ENCODE measurements at regions of chr10 and their contacts with region 1.

Region 1: GRCh38 chr10:511101-511848 is 178.2 kb downstream of the DIP2C start:
- DNase-seq: peak; percentile 71
- ATAC-seq: peak; percentile 88
- H3K4me3 ChIP-seq: no peak overlapping the region
- H3K27ac ChIP-seq: no peak overlapping the region
- H3K4me1 ChIP-seq: peaks cover 26% of the 10 kb centered on the region
- H3K27me3 ChIP-seq: no peaks in the 10 kb centered on the region
- CTCF ChIP-seq: peak; percentile 98
- EP300 ChIP-seq: no peak
- POLR2A ChIP-seq: no peak
- RAD21 ChIP-seq: peak; percentile 92

Region 2: GRCh38 chr10:484441-484924 is 26.8 kb before region 1 on chr10:
- CTCF ChIA-PET with region 1: no interaction called
- POLR2A ChIA-PET with region 1: no interaction called
- in situ Hi-C with region 1: no loop called
- intact Hi-C with region 1: no loop called
- DNase-seq: no peak
- ATAC-seq: no peak
- H3K4me3 ChIP-seq: no peak overlapping the region
- H3K27ac ChIP-seq: no peak overlapping the region
- H3K4me1 ChIP-seq: no peaks in the 10 kb centered on the region
- H3K27me3 ChIP-seq: no peaks in the 10 kb centered on the region
- CTCF ChIP-seq: no peak
- EP300 ChIP-seq: no peak
- POLR2A ChIP-seq: no peak
- RAD21 ChIP-seq: no peak

Region 3: DNA sequence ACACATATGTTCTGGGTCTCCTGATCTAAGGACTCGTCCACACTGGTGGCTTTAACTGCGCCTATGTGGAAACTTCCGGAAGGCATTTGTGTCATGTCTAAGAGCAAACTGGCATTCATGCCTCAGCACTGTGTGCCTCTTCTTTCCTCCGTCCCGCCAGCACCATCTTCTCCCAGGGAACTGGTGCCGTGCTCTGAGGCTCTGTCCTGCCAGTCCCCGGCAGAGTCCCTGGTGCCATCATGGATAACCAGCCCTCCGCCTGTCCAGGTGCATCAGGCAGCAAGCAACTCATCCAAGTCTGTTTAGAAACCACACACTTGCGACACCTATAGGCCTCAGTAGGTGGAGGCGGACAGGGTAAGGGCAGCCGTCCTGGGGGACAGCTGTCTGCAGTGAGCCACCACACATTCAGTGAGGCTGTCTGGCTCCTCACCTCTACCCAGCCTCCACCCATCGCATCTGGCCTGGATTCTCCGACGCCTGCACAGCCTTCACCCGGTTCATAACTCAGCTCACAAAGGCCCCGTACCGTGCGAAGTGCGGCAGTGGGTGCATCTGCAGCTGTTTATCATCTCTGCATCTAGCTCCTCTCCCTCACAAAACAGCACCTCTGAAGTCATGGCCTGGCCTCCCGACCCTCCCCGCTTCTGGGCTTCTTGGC is 15.5 kb after region 1 on chr10:
- CTCF ChIA-PET with region 1: no interaction called
- POLR2A ChIA-PET with region 1: no interaction called
- in situ Hi-C with region 1: no loop called
- intact Hi-C with region 1: no loop called
- DNase-seq: no peak
- ATAC-seq: peak; percentile 86
- H3K4me3 ChIP-seq: no peak overlapping the region
- H3K27ac ChIP-seq: no peak overlapping the region
- H3K4me1 ChIP-seq: no peaks in the 10 kb centered on the region
- H3K27me3 ChIP-seq: no peaks in the 10 kb centered on the region
- CTCF ChIP-seq: peak; percentile 47
- EP300 ChIP-seq: no peak
- POLR2A ChIP-seq: no peak
- RAD21 ChIP-seq: no peak

Region 4: DNA sequence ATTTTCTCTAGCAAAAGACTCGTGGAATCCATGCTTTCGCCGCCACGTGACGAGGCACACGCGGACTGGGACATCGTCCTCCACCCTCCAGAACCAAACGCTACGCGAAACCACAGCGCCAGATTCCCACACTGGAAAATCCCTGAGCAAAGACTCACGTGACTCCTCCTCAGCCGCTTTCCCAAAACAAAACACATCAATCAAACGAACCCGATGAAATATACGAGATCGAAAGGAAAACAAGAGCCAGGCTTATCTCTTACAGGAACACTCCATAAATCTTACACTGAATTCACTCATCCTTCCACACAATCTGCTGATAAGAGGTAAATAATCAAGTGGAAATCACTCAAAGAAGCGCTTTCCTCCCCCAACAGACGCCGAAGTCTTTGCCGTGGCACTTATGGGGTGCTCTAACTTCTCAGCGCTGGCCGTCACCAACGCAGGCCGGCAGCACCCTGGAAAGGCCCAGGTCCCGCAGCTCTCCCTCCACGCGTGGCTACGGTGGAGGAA is 154.4 kb after region 1 on chr10:
- CTCF ChIA-PET with region 1: no interaction called
- POLR2A ChIA-PET with region 1: no interaction called
- in situ Hi-C with region 1: no loop called
- intact Hi-C with region 1: no loop called
- DNase-seq: no peak
- ATAC-seq: no peak
- H3K4me3 ChIP-seq: no peak overlapping the region
- H3K27ac ChIP-seq: no peak overlapping the region
- H3K4me1 ChIP-seq: peaks cover 30% of the 10 kb centered on the region
- H3K27me3 ChIP-seq: no peaks in the 10 kb centered on the region
- CTCF ChIP-seq: no peak
- EP300 ChIP-seq: no peak
- POLR2A ChIP-seq: no peak
- RAD21 ChIP-seq: no peak

Region 5: DNA sequence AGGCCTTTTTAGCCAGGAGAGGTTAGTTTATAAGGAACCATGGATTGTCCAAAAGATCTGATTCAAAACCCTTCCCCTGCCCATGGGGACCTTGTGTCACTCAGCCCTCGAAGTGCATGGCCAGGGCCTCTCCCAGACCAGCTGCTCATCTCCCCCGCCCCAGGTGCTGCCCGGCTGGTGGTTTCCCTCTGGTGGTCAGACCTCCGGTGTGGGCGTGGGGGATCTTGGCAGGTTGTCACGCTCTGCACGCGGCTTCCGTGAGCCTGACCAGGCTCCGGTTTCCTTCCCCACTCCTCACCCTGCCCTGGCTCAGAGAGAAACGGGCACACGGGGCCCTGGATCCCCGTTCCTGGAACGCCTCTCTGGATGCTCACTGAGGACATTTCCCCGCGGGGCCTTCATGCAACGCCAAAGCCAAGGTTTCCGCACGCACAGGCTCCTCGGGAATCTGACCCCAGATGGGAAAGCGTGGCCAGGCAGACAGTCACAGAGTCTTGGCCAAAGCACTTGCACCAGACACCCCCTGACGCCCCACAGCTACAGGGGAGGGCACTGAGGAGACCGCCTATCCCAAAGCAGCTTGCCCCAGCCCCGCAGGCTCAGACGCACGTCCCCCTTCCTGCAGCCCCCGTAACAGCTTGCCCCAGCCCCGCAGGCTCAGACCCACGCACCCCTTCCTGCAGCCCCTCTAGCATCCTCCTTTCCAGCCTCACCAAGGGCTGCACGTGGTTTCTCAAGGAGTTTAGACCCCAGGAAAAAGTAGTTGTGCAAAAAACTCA is 186.0 kb after region 1 on chr10:
- CTCF ChIA-PET with region 1: no interaction called
- POLR2A ChIA-PET with region 1: no interaction called
- in situ Hi-C with region 1: no loop called
- intact Hi-C with region 1: loop called (anchors 1 kb)
- DNase-seq: no peak
- ATAC-seq: peak; percentile 70
- H3K4me3 ChIP-seq: no peak overlapping the region; a peak in 1 of 6 replicates
- H3K27ac ChIP-seq: no peak overlapping the region
- H3K4me1 ChIP-seq: peaks cover 13% of the 10 kb centered on the region; the same call in 1 of the 2 replicates
- H3K27me3 ChIP-seq: peaks cover 8 to 63% of the 10 kb centered on the region in 2 experiments
- CTCF ChIP-seq: peak; percentile 42
- EP300 ChIP-seq: no peak
- POLR2A ChIP-seq: no peak
- RAD21 ChIP-seq: no peak

Region 6: DNA sequence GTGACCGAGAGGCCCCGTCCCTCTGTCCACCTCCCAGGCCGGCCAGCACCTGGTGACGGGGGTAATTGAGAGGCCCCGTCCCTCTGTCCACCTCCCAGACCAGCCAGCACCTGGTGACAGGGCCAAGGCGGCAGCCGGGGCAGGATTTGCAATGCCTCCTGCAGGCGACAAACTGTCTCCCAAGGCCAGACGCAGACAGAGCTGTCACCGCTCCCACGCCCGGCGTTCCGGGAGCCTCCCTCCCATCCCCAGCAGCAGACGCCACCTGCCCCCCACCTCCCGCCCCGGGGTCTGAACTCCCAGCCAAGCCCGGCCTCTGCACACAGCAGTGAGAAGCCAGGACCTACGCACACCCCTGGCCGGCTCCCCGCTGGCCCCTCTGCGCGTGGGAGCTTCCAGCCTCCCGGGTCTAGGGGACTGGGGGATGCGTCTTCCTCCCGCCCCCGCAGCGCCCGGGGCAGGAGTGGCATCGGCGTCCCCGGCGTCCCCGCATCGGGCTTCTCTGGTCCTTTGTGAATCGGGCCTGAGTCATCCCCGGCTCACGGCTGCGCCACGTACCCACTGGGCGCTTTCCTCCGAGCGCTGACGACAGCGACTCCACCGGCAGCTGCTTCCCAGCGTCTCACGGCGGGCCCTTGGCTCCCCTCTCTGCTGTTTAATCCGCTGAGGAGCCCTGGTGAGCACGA is 273.3 kb after region 1 on chr10:
- CTCF ChIA-PET with region 1: interaction called, 8 read pairs
- POLR2A ChIA-PET with region 1: no interaction called
- in situ Hi-C with region 1: loop called (anchors 5 kb)
- intact Hi-C with region 1: no loop called
- DNase-seq: no peak
- ATAC-seq: peak; percentile 50
- H3K4me3 ChIP-seq: peak overlapping the region; percentile 47 to 71 (median 54)
- H3K27ac ChIP-seq: no peak overlapping the region
- H3K4me1 ChIP-seq: peaks cover 37% of the 10 kb centered on the region
- H3K27me3 ChIP-seq: peaks cover 5 to 16% of the 10 kb centered on the region in 2 experiments; a peak in 3 of 5 replicates
- CTCF ChIP-seq: peak; percentile 40
- EP300 ChIP-seq: no peak
- POLR2A ChIP-seq: no peak
- RAD21 ChIP-seq: no peak

Region 7: GRCh38 chr10:794466-794865 is 283.2 kb after region 1 on chr10:
- CTCF ChIA-PET with region 1: interaction called, 14 read pairs
- POLR2A ChIA-PET with region 1: no interaction called
- in situ Hi-C with region 1: loop called (anchors 5 kb)
- intact Hi-C with region 1: loop called (anchors 1 kb)
- DNase-seq: peak; percentile 57
- ATAC-seq: peak; percentile 82
- H3K4me3 ChIP-seq: no peak overlapping the region
- H3K27ac ChIP-seq: no peak overlapping the region
- H3K4me1 ChIP-seq: peaks cover 12% of the 10 kb centered on the region
- H3K27me3 ChIP-seq: no peaks in the 10 kb centered on the region
- CTCF ChIP-seq: peak; percentile 81
- EP300 ChIP-seq: no peak
- POLR2A ChIP-seq: no peak
- RAD21 ChIP-seq: peak; percentile 78

Measured in HepG2 (cell line).